OCI-LY7 (cell line): ENCODE measurements at regions of chr9 and their contacts with region 1.

Region 1: GRCh38 chr9:22037954-22038690 is 29.0 kb upstream of the CDKN2B start:
- DNase-seq: peak; percentile 60
- H3K4me3 ChIP-seq: no peak overlapping the region
- H3K27ac ChIP-seq: no peak overlapping the region
- H3K4me1 ChIP-seq: no peaks in the 10 kb centered on the region
- CTCF ChIP-seq: peak; percentile 84

Region 2: GRCh38 chr9:21709464-21710058 is 328.6 kb before region 1 on chr9:
- CTCF ChIA-PET with region 1: no interaction called
- POLR2A ChIA-PET with region 1: no interaction called
- intact Hi-C with region 1: loop called (anchors 10 kb)
- DNase-seq: peak; percentile 69
- H3K4me3 ChIP-seq: no peak overlapping the region
- H3K27ac ChIP-seq: no peak overlapping the region
- H3K4me1 ChIP-seq: no peaks in the 10 kb centered on the region
- CTCF ChIP-seq: peak; percentile 90

Region 3: GRCh38 chr9:22052376-22052945 is 14.3 kb after region 1 on chr9:
- CTCF ChIA-PET with region 1: no interaction called
- POLR2A ChIA-PET with region 1: interaction called, 17 read pairs
- intact Hi-C with region 1: no loop called
- DNase-seq: no peak
- H3K4me3 ChIP-seq: no peak overlapping the region
- H3K27ac ChIP-seq: no peak overlapping the region
- H3K4me1 ChIP-seq: peaks cover 13% of the 10 kb centered on the region
- CTCF ChIP-seq: no peak

Region 4: DNA sequence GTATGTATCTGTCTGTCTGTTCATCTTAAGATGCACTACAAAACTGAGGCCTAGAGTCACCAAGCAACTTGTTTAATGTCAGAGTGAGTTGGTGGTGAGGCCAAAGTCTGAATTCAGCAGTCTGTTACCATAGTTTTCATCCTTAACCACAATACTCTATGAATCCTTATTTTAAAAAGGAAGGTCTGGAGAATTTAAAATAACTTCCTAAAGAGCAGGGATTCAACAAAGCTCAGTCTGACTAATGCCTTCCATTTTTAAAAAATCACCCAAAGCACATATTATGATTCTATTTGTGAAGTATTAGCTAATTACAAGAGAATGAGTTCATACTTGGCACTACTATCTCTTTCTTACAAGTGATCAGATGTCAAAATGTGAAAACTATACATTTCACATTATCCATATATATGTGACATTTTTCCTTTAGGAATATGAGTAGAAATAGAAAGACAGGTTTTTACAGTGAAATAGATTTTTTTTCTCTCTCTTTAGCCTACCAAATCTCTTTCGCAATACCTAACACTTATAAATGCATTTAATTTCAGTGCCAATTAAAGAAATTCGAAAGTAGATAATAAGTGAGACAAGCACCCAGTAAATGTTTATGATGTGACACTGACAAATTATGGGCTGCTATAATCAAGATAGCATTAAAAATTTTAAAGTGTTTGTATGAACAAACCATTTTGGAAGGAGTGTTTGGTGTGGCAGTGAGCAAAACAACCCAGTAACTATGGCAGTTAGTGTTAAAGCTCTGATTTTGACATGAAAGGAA is 73.2 kb after region 1 on chr9:
- CTCF ChIA-PET with region 1: no interaction called
- POLR2A ChIA-PET with region 1: no interaction called
- intact Hi-C with region 1: no loop called
- DNase-seq: no peak
- H3K4me3 ChIP-seq: no peak overlapping the region
- H3K27ac ChIP-seq: no peak overlapping the region
- H3K4me1 ChIP-seq: no peaks in the 10 kb centered on the region
- CTCF ChIP-seq: no peak

Region 5: DNA sequence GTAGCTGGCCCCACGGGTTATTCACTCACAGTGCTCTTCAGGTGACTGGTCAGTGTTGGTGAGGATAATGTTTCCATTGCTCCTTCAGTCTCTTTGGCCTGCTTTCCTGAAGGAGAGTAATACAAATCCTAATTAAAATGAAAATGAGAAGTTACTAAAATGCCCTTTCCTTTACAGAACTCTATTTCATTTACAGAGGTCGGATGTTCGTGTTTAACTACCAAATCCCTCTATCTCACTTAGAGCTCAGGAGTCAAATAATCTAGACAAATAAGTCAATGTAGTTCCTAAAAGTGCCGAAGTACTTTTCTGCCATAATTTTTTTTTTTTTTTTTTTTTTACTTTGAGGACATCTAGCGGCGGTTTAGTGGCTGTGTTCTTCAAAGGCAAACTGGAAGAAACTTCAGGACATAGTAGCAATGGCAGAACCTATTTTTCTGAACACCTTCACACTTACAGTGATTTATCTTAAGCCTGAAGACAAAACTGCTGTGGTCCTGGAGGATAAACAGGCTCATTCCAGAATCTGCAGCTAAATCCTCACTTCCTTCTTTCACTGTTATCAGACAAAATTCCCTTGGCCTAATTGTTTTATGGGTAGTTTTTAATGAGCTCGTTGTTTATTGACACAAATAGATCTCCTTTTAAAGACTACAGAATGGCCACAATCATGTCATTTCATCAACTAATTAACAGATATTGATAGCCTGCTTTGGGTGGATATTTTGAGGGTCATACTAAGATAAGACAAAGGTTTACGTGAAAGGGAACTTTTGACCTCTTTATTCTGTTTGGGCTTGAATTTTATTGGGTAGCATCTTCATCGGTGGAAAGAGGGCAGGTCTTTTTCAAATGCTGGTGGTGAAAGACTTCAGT is 200.9 kb after region 1 on chr9:
- CTCF ChIA-PET with region 1: no interaction called
- POLR2A ChIA-PET with region 1: interaction called, 3 read pairs
- intact Hi-C with region 1: loop called (anchors 5 kb)
- DNase-seq: peak; percentile 75
- H3K4me3 ChIP-seq: no peak overlapping the region
- H3K27ac ChIP-seq: no peak overlapping the region
- H3K4me1 ChIP-seq: peaks cover 38% of the 10 kb centered on the region
- CTCF ChIP-seq: peak; percentile 76